Endothelial cell of umbilical vein (primary cell): ENCODE measurements at regions of chr11 and their contacts with region 1.

Region 1: DNA sequence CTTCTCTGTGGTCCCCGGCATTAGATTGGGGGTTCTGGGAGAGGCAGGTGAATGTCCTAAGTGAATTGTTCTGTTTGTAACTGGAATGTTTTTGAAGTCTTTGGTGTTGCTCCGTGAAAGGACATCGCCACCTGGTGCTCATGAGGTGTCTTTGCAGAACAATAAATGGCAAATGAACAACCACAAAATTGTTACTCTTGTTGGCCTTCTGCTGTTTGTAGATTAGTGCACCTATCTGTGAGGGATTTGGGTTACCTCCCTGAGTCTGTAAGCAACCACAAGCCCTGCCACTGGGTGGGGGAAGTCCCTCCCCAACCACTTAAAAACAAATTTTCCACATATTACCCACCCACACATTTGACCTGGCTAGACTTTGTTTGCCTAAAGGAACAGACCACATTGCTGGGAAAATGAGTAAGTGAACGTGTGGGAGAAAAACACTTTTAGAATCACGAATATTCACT is 4.7 kb downstream of the MPEG1 start:
- DNase-seq: peak; percentile 41
- H3K4me3 ChIP-seq: no peak overlapping the region
- H3K27ac ChIP-seq: no peak overlapping the region
- H3K4me1 ChIP-seq: no peaks in the 10 kb centered on the region
- H3K27me3 ChIP-seq: no peaks in the 10 kb centered on the region
- CTCF ChIP-seq: peak; percentile 57 to 68
- POLR2A ChIP-seq: no peak

Region 2: GRCh38 chr11:59186130-59186594 is 21.9 kb before region 1 on chr11:
- CTCF ChIA-PET with region 1: interaction called, 14 read pairs
- POLR2A ChIA-PET with region 1: no interaction called
- dilution Hi-C with region 1: no loop called
- intact Hi-C with region 1: no loop called
- DNase-seq: peak; percentile 3
- H3K4me3 ChIP-seq: no peak overlapping the region
- H3K27ac ChIP-seq: no peak overlapping the region
- H3K4me1 ChIP-seq: peaks cover 2% of the 10 kb centered on the region
- H3K27me3 ChIP-seq: peaks cover 4 to 11% of the 10 kb centered on the region in 2 experiments
- CTCF ChIP-seq: peak; percentile 50 to 62
- POLR2A ChIP-seq: no peak

Region 3: GRCh38 chr11:59680287-59681154 is 472.5 kb after region 1 on chr11:
- CTCF ChIA-PET with region 1: interaction called, 5 read pairs
- POLR2A ChIA-PET with region 1: no interaction called
- dilution Hi-C with region 1: no loop called
- intact Hi-C with region 1: loop called (anchors 1 kb)
- DNase-seq: peak; percentile 81
- H3K4me3 ChIP-seq: no peak overlapping the region
- H3K27ac ChIP-seq: no peak overlapping the region
- H3K4me1 ChIP-seq: no peaks in the 10 kb centered on the region
- H3K27me3 ChIP-seq: peaks cover 2% of the 10 kb centered on the region in 2 experiments
- CTCF ChIP-seq: peak; percentile 76 to 78
- POLR2A ChIP-seq: no peak